Stomach (tissue), 19 donors: ENCODE measurements at regions of chr18 and their contacts with region 1.

Region 1: GRCh38 chr18:36284671-36285295 is 12.7 kb upstream of the FHOD3 start:
- DNase-seq: peak in 1 of 2 donors; percentile 84
- H3K4me3 ChIP-seq: no peak overlapping the region
- H3K27ac ChIP-seq: no peak overlapping the region
- H3K4me1 ChIP-seq: no peaks in the 10 kb centered on the region
- H3K27me3 ChIP-seq: peaks cover 3 to 22% (median 4%) of the 10 kb centered on the region in 3 donors
- CTCF ChIP-seq: peak in 5 of 7 experiments; percentile 73 to 90 (median 82)
- EP300 ChIP-seq: no peak
- POLR2A ChIP-seq: no peak

Region 2: DNA sequence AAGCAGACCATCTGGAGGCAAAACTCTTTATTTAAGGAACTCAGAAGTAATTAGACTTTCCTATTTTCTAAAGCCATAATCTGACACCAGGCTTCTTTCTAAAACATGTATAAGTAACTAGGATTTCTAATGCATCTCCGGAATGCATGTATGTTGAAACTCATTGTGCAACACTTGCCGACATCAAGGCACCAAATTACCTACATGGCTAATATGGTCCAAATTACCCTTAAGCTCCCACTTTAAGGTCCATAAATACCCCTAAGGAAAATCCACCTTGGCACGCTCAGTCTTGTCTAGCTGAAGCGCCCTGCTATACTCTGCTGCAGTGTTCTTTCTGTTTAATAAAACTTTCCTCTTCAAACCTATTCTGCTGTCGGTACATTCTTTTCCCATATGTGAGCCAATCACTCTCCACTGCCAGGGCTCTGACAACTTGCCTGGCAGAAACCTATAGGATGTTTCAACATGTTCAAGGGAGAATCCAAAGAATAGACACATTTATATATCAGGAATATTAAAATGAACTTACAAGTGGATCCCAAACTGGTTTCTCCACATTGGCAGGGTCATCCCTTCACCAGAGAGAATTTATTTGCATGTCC is 531.4 kb before region 1 on chr18:
- intact Hi-C with region 1: loop called (anchors 5 kb)
- DNase-seq: no peak
- H3K4me3 ChIP-seq: no peak overlapping the region
- H3K27ac ChIP-seq: no peak overlapping the region
- H3K4me1 ChIP-seq: no peaks in the 10 kb centered on the region
- H3K27me3 ChIP-seq: peaks cover 0 to 13% (median 0%) of the 10 kb centered on the region in 3 donors
- CTCF ChIP-seq: no peak
- EP300 ChIP-seq: no peak
- POLR2A ChIP-seq: no peak

Region 3: DNA sequence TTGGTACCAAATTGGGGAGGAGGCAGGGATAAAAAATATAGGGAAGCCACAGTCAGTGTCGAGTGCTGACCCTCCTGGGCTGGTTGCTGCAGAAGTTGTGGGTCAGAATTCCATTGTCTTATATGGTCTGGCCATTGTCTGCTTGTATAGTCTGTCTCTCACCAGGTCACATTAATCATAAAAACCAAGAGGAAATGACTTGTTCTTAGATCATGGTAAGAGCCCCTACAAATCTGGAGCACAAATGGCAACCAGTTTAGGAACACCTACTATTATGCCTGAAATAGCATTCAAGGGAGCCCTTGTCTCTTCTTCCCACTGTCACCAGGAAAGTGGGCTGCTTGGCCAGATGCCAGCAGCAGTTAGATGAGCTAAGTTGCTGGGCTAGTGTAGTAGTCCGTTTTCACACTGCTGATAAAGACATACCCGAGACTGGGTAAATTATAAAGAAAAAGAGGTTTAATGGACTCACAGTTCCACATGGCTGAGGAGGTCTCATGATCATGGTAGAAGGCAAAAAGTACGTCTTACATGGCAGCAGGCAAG is 431.9 kb before region 1 on chr18:
- intact Hi-C with region 1: no loop called
- DNase-seq: no peak
- H3K4me3 ChIP-seq: no peak overlapping the region
- H3K27ac ChIP-seq: no peak overlapping the region
- H3K4me1 ChIP-seq: no peaks in the 10 kb centered on the region
- H3K27me3 ChIP-seq: peaks cover 0 to 9% (median 0%) of the 10 kb centered on the region in 3 donors
- CTCF ChIP-seq: no peak
- EP300 ChIP-seq: no peak
- POLR2A ChIP-seq: no peak

Region 4: DNA sequence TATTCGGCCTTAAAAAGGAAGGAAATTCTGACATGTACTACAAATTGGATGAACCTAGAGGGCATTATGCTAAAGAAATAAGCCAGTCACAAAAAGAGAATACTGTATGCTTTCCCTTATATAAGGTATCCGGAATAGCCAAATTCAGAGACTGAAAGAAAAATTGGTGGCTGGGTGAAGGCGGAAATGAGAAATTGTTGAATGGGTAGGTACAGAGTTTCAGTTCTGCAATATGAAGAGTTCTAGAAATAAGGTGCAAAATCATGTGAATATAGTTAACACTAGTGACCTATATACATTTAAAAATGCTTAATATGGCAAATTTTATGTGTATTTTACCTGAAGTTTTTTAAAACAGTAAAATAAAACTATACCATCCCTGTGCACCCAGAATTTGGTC is 269.2 kb before region 1 on chr18:
- intact Hi-C with region 1: loop called (anchors 5 kb)
- DNase-seq: no peak
- H3K4me3 ChIP-seq: no peak overlapping the region
- H3K27ac ChIP-seq: no peak overlapping the region
- H3K4me1 ChIP-seq: peaks cover 0 to 7% (median 3%) of the 10 kb centered on the region in 4 donors
- H3K27me3 ChIP-seq: no peaks in the 10 kb centered on the region
- CTCF ChIP-seq: no peak
- EP300 ChIP-seq: no peak
- POLR2A ChIP-seq: no peak

Region 5: DNA sequence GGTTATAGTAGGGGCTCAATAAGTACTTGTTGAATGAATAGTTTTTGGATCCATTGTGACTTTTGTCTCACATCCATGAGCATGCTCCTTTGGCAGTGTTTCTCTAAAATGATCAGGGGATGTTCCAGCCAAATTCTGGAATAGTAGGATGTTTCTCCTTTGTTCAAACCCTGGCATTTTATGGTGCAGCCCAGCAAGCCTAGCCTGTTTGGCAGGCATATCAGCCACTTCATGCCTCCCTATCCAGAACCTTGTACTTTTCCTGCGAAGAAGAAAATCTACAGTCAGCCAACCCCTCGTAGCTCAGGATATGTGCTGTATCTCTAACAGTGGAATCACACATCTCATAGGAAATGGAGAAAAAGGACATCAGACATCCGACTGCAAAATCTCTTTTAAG is 190.4 kb before region 1 on chr18:
- intact Hi-C with region 1: loop called (anchors 5 kb)
- DNase-seq: no peak
- H3K4me3 ChIP-seq: no peak overlapping the region
- H3K27ac ChIP-seq: no peak overlapping the region
- H3K4me1 ChIP-seq: no peaks in the 10 kb centered on the region
- H3K27me3 ChIP-seq: peaks cover 0 to 5% (median 0%) of the 10 kb centered on the region in 3 donors
- CTCF ChIP-seq: no peak
- EP300 ChIP-seq: no peak
- POLR2A ChIP-seq: no peak